ENCODE measurements at regions of chr9 and their contacts with region 1.

Region 1: GRCh38 chr9:22119537-22120158 is 110.5 kb upstream of the CDKN2B start:
- DNase-seq: peak; percentile 33
- ATAC-seq: peak; percentile 80
- H3K4me3 Mint-ChIP-seq: no peak overlapping the region
- H3K27ac Mint-ChIP-seq: no peak overlapping the region
- H3K4me1 Mint-ChIP-seq: peaks cover 3% of the 10 kb centered on the region
- H3K27me3 Mint-ChIP-seq: peaks cover 18% of the 10 kb centered on the region
- CTCF ChIP-seq: peak; percentile 40

Region 2: DNA sequence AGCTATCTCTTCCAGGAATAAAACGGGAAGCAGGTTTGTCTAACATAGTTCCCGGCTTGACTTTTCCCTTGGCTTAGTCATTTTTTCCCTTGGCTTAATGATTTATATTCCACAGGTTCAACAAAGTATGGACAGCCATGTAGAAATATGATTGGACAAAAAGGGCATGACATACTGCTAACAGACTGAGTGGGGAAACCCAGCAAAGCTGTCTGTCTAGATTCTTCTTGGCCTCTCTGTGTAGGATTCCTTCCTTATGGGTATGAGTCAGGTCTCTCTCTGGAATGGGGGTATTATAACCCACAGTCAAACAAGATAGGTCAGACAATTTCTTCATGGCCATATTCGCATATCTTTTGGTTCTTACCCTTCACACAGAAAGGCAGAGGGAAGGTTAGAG is 322.9 kb before region 1 on chr9:
- CTCF ChIA-PET with region 1: no interaction called
- POLR2A ChIA-PET with region 1: no interaction called
- intact Hi-C with region 1: no loop called
- DNase-seq: no peak
- ATAC-seq: no peak
- H3K4me3 Mint-ChIP-seq: no peak overlapping the region
- H3K27ac Mint-ChIP-seq: no peak overlapping the region
- H3K4me1 Mint-ChIP-seq: peaks cover 15% of the 10 kb centered on the region
- H3K27me3 Mint-ChIP-seq: peaks cover 21% of the 10 kb centered on the region
- CTCF ChIP-seq: no peak

Region 3: GRCh38 chr9:22037954-22038690 is 81.5 kb before region 1 on chr9:
- CTCF ChIA-PET with region 1: interaction called, 28 read pairs
- POLR2A ChIA-PET with region 1: no interaction called
- intact Hi-C with region 1: no loop called
- DNase-seq: no peak
- ATAC-seq: peak; percentile 47
- H3K4me3 Mint-ChIP-seq: no peak overlapping the region
- H3K27ac Mint-ChIP-seq: no peak overlapping the region
- H3K4me1 Mint-ChIP-seq: peaks cover 23% of the 10 kb centered on the region
- H3K27me3 Mint-ChIP-seq: no peaks in the 10 kb centered on the region
- CTCF ChIP-seq: peak; percentile 83

Region 4: DNA sequence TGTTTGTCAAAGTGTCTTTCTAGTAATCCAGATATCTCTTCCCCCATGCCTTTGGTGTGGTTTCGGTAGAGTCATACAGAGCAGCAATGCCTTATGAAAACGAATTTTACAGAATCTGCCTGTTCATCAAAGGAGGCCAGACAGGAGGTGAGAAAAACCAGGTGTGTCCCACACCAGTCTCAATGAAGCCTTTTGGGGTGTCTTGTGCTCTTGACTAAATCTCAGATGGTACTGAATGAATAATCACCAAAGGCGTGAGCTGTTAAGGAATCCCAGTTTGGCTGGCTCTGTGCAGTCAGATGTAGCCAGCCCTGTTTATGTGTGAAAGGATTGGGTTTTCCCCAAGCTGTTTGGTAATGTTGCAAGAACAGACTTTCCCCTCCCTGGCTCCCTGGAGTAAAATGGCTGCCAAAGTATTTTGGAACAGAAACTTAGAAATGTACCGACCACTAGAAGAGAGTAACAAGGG is 39.7 kb before region 1 on chr9:
- CTCF ChIA-PET with region 1: interaction called, 12 read pairs
- POLR2A ChIA-PET with region 1: no interaction called
- intact Hi-C with region 1: no loop called
- DNase-seq: peak; percentile 82
- ATAC-seq: peak; percentile 95
- H3K4me3 Mint-ChIP-seq: peak overlapping the region; percentile 16
- H3K27ac Mint-ChIP-seq: peak overlapping the region; percentile 72
- H3K4me1 Mint-ChIP-seq: peaks cover 43% of the 10 kb centered on the region
- H3K27me3 Mint-ChIP-seq: peaks cover 26% of the 10 kb centered on the region
- CTCF ChIP-seq: no peak

Region 5: DNA sequence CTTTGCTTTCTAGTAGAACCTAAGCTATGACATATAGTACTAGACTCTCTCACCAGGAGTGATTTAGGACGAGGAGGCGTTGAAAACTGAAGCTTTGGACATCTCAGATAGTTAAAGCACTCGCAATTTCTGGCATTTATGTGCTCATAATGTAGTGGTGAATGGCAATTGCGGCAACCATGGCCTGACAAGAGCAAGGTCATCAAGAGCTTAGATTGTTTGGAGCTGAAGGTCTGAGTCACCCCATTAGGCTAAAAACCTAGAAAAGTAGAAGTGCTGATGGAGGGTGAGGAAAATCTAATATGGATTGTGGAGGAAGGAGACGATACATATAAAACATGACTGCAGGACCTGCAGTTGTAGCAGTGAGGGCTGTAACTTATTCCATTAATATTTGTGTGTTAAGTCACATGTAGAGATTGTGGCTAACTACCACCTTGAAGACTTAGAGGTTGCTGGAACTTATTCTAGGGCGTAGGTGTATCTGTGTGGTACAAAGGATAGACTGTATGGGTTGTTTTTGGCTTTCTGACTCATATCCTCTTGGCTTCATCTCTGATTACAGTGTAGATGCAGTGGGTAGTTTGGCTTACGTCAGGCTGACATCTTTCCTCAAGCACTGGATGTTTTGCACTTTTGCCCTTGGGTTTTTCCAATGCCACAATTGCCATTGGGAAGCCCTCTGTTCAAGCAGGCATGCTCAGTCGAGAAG is 28.3 kb after region 1 on chr9:
- CTCF ChIA-PET with region 1: interaction called, 11 read pairs
- POLR2A ChIA-PET with region 1: no interaction called
- intact Hi-C with region 1: no loop called
- DNase-seq: peak; percentile 47
- ATAC-seq: peak; percentile 98
- H3K4me3 Mint-ChIP-seq: no peak overlapping the region
- H3K27ac Mint-ChIP-seq: no peak overlapping the region
- H3K4me1 Mint-ChIP-seq: peaks cover 21% of the 10 kb centered on the region
- H3K27me3 Mint-ChIP-seq: peaks cover 10% of the 10 kb centered on the region
- CTCF ChIP-seq: no peak

Region 6: DNA sequence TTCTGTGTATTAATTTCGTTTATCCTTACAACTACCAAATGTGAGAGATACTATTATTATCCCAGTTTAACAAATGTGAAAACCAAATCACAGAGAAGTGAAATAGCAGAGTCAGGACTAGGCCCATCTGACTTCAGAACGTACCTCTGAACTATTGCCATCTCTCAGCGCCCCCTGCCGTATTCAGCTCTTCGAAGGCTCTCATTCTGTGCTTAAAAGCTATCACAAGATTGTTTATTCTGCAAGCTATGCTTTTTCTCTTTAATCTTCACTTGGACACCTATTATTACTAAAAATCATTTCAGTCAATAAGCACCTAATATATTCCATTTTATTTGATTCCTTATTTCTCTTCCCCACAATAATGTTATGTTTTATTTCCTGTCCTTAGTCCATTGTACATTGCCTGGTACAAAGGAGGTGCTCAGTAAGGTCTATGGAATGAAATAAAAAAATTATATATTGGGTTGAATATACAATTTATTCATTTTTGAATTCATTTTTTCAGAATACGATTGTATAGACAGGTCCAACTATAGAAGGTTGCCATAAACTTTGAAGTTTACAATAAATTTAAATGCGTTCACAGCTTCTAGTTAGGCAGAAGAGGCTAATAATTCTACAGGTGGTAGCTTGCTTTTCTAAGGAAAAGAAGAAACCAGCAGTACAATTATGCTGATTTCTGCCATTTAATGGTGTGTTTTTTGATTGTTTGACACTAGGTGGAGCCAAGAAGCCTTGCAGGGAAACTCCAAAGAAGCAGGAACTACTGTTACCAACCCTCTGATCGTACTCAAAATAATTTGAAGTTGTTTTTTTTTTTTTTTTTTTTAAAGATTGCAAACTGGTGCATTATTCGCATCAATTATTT is 124.7 kb after region 1 on chr9:
- CTCF ChIA-PET with region 1: interaction called, 11 read pairs
- POLR2A ChIA-PET with region 1: no interaction called
- intact Hi-C with region 1: loop called (anchors 10 kb)
- DNase-seq: peak; percentile 61
- ATAC-seq: peak; percentile 38
- H3K4me3 Mint-ChIP-seq: no peak overlapping the region
- H3K27ac Mint-ChIP-seq: no peak overlapping the region
- H3K4me1 Mint-ChIP-seq: peaks cover 29% of the 10 kb centered on the region
- H3K27me3 Mint-ChIP-seq: peaks cover 10% of the 10 kb centered on the region
- CTCF ChIP-seq: peak; percentile 66

Measured in activated CD8-positive, alpha-beta T cell treated with anti-CD3 and anti-CD28 coated beads for 36 hours (primary cell).